ENCODE measurements at regions of chr19 and their contacts with region 1.

Region 1: GRCh38 chr19:17555480-17555928 is at the start of gene COLGALT1:
- DNase-seq: peak; percentile 97 to 98
- ATAC-seq: peak; percentile 95
- H3K4me3 ChIP-seq: peak within 1 kb of the TSS; percentile 62 to 100 (median 87)
- H3K27ac ChIP-seq: peak within 1 kb of the TSS; percentile 72 to 86 (median 85)
- H3K4me1 ChIP-seq: peaks cover 13 to 25% of the 10 kb centered on the region in 2 donors
- H3K27me3 ChIP-seq: no peaks in the 10 kb centered on the region
- CTCF ChIP-seq: peak in 1 of 5 experiments; percentile 19
- POLR2A ChIP-seq: peak; percentile 62 to 72
- total RNA-seq, gene COLGALT1: 16.6 to 33.2 (median 27.5) TPM

Region 2: DNA sequence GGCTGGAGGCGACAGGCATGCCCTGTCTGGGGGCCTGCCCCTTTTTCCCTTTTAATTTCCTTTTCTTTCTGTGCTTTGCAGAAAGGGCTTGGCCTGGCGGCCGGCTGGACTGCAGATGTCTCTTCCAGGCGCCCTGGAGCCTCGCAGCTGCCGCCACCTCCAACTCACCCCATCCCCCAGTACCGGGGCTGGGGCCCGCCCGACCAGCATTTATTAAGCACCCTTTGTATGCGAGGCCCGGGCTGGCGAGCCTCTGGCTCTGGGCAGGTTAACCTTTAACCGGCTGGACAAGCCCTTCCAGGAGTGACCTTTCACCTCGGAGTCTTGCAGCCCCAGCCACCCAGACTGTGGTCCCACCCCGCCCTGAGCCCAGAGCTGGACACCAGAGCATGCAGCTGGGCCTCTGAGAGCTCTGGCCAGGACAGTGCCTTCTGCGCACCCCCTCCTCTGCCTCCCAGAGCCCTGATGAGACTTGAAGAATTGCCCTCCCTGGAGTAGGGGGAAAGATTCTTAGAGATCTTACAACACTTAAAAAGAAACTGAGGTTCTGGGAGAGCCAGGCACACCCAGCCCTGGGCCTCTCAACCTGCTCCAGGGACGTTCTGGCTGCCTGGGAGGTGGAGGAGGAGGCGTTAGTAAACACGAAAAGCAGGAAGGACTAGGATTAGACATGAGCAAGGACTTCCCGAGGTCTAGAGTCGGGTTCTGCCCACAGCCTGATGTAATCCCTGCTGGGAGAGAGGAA is 308.7 kb before region 1 on chr19:
- in situ Hi-C with region 1: no loop called
- intact Hi-C with region 1: loop called (anchors 1 kb)
- DNase-seq: no peak
- ATAC-seq: peak in 1 of 2 donors; percentile 1
- H3K4me3 ChIP-seq: peak overlapping the region; percentile 54 to 78 (median 69)
- H3K27ac ChIP-seq: peak overlapping the region; percentile 75 to 93 (median 87)
- H3K4me1 ChIP-seq: peaks cover 21 to 26% of the 10 kb centered on the region in 2 donors
- H3K27me3 ChIP-seq: no peaks in the 10 kb centered on the region
- CTCF ChIP-seq: no peak
- POLR2A ChIP-seq: no peak

Region 3: GRCh38 chr19:17511724-17512573 is 43.6 kb before region 1 on chr19:
- in situ Hi-C with region 1: no loop called
- intact Hi-C with region 1: loop called (anchors 1 kb)
- DNase-seq: peak; percentile 80 to 86
- ATAC-seq: peak; percentile 68 to 72
- H3K4me3 ChIP-seq: peak overlapping the region; percentile 75 to 100 (median 84)
- H3K27ac ChIP-seq: peak overlapping the region; percentile 90 to 100 (median 96)
- H3K4me1 ChIP-seq: peaks cover 22 to 27% of the 10 kb centered on the region in 2 donors
- H3K27me3 ChIP-seq: no peaks in the 10 kb centered on the region
- CTCF ChIP-seq: peak in 3 of 5 experiments; percentile 33 to 78 (median 72)
- POLR2A ChIP-seq: peak; percentile 76 to 82